ENCODE measurements at regions of chr1 and their contacts with region 1.

Region 1: DNA sequence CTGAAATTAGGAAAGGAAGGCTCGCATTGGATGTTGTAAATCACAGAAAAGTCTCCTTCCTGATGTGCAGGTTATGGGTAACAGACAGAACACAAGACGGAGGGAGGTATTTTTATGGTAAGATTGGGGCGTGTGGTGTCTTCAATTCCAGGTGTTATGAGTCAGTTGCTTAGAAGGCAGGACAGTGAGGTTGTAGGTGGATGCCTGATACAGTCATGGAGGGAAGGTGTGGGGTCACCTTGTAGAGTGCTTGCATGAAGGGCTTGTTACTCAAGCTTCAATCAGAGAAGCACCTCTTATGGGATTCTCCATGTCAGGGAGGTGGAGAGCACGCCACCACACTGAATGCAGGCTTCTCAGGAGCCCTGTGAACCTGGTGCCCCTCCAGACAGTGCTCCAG is 63.1 kb downstream of the C1orf21 start:
- DNase-seq: no peak
- ATAC-seq: peak in 2 of 4 donors; percentile 17 to 44
- H3K4me3 ChIP-seq: no peak overlapping the region
- H3K27ac ChIP-seq: no peak overlapping the region
- H3K4me1 ChIP-seq: peaks cover 0 to 45% (median 20%) of the 10 kb centered on the region in 12 donors
- H3K27me3 ChIP-seq: no peaks in the 10 kb centered on the region
- CTCF ChIP-seq: no peak
- POLR2A ChIP-seq: no peak

Region 2: GRCh38 chr1:184260382-184260781 is 189.5 kb before region 1 on chr1:
- intact Hi-C with region 1: no loop called
- DNase-seq: no peak
- ATAC-seq: no peak
- H3K4me3 ChIP-seq: no peak overlapping the region
- H3K27ac ChIP-seq: no peak overlapping the region
- H3K4me1 ChIP-seq: peaks cover 0 to 16% (median 4%) of the 10 kb centered on the region in 12 donors
- H3K27me3 ChIP-seq: no peaks in the 10 kb centered on the region
- CTCF ChIP-seq: no peak
- POLR2A ChIP-seq: no peak

Region 3: GRCh38 chr1:184399192-184399847 is 50.6 kb before region 1 on chr1:
- intact Hi-C with region 1: loop called in 1 of 10 experiments (anchors 10 kb)
- DNase-seq: no peak
- ATAC-seq: peak; percentile 26 to 65 (median 47)
- H3K4me3 ChIP-seq: no peak overlapping the region
- H3K27ac ChIP-seq: peak overlapping the region in 5 of 12 donors; percentile 11 to 38 (median 28)
- H3K4me1 ChIP-seq: peaks cover 0 to 66% (median 35%) of the 10 kb centered on the region in 12 donors
- H3K27me3 ChIP-seq: no peaks in the 10 kb centered on the region
- CTCF ChIP-seq: no peak
- POLR2A ChIP-seq: no peak

Region 4: DNA sequence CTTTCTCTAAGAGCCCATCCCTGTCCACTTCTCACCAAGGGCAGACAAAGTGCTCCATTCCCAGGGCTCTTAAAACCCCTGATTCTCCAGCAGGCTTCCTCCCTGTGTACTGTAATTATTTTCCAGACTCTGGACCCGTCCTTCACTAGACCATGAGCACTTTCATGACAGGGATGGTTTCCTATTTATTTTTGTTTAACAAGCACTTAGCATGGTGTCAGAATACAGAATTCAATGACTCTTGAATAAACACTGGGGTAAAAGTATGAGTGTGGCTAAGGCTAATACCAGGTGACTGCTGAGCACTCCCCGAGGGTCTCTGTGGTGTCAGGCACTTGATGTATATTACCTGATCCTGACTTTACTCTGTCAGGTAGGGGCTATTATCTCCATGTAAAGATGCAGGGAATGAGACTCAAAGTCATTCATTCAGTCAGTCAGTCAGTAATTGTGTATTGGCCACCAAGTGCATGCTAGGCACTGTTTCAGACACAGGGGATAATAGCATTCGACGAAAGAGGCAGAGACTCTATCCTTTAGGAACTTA is 15.9 kb before region 1 on chr1:
- intact Hi-C with region 1: no loop called
- DNase-seq: no peak
- ATAC-seq: no peak
- H3K4me3 ChIP-seq: no peak overlapping the region
- H3K27ac ChIP-seq: no peak overlapping the region
- H3K4me1 ChIP-seq: peaks cover 0 to 20% (median 7%) of the 10 kb centered on the region in 12 donors
- H3K27me3 ChIP-seq: no peaks in the 10 kb centered on the region
- CTCF ChIP-seq: no peak
- POLR2A ChIP-seq: no peak

Region 5: GRCh38 chr1:184610876-184611595 is 161.1 kb after region 1 on chr1:
- intact Hi-C with region 1: no loop called
- DNase-seq: peak in 3 of 5 donors; percentile 40 to 63 (median 50)
- ATAC-seq: peak; percentile 51 to 80 (median 70)
- H3K4me3 ChIP-seq: peak overlapping the region in 4 of 12 donors; percentile 7 to 22 (median 20)
- H3K27ac ChIP-seq: peak overlapping the region in 10 of 12 donors; percentile 32 to 82 (median 55)
- H3K4me1 ChIP-seq: peaks cover 0 to 45% (median 25%) of the 10 kb centered on the region in 12 donors
- H3K27me3 ChIP-seq: no peaks in the 10 kb centered on the region
- CTCF ChIP-seq: no peak
- POLR2A ChIP-seq: no peak